ENCODE measurements at regions of chr6 and their contacts with region 1.

Region 1: GRCh38 chr6:134979142-134979541 is 29.2 kb upstream of the ALDH8A1 start:
- DNase-seq: peak; percentile 52
- H3K4me3 Mint-ChIP-seq: peak overlapping the region; percentile 43
- H3K27ac Mint-ChIP-seq: peak overlapping the region; percentile 65
- H3K4me1 Mint-ChIP-seq: peaks cover 58% of the 10 kb centered on the region
- H3K27me3 Mint-ChIP-seq: no peaks in the 10 kb centered on the region

Region 2: DNA sequence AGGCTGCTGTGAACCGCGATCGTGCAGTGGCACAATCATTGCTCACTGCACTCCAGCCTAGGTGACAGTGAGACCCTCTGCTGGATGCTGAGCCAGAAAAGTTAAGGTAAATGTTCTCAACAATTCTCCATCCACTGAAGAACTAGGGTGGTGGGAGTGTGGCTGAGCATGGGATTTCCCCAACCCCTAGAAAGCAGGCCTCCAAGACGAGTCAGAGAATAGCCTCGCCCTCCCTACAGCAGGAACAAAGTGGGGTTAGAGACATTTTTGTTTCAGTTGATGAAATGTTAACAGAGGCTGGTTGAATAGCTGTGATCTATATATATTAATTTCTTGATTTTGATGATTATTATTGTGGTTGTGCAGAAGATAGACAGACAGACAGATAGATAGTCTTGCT is 23.1 kb before region 1 on chr6:
- intact Hi-C with region 1: loop called (anchors 1 kb)
- DNase-seq: no peak
- H3K4me3 Mint-ChIP-seq: no peak overlapping the region
- H3K27ac Mint-ChIP-seq: no peak overlapping the region
- H3K4me1 Mint-ChIP-seq: peaks cover 20% of the 10 kb centered on the region
- H3K27me3 Mint-ChIP-seq: no peaks in the 10 kb centered on the region

Region 3: DNA sequence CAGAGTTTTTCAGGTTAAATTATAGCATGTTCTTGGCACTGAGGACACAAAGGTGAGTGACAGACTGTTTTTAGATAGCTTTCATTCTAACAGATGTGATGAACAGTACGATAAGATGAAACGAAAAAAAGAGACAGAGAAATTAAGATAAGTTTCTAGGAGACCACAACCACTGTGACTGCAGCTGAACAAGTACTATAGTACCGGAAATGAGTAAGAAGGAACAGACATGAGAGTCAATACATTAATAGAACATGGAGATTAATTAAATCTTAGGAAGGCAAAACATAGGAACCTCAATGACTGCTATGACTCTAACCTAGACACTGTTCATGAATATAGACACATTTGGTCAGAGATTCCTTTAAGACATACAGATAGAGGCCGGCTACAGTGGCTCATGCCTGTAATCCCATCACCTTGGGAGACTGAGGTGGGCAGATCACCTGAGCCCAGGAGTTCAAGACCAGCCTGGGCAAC is 35.3 kb after region 1 on chr6:
- intact Hi-C with region 1: loop called (anchors 1 kb)
- DNase-seq: no peak
- H3K4me3 Mint-ChIP-seq: peak overlapping the region; percentile 54
- H3K27ac Mint-ChIP-seq: peak overlapping the region; percentile 92
- H3K4me1 Mint-ChIP-seq: peaks cover 57% of the 10 kb centered on the region
- H3K27me3 Mint-ChIP-seq: no peaks in the 10 kb centered on the region

Region 4: DNA sequence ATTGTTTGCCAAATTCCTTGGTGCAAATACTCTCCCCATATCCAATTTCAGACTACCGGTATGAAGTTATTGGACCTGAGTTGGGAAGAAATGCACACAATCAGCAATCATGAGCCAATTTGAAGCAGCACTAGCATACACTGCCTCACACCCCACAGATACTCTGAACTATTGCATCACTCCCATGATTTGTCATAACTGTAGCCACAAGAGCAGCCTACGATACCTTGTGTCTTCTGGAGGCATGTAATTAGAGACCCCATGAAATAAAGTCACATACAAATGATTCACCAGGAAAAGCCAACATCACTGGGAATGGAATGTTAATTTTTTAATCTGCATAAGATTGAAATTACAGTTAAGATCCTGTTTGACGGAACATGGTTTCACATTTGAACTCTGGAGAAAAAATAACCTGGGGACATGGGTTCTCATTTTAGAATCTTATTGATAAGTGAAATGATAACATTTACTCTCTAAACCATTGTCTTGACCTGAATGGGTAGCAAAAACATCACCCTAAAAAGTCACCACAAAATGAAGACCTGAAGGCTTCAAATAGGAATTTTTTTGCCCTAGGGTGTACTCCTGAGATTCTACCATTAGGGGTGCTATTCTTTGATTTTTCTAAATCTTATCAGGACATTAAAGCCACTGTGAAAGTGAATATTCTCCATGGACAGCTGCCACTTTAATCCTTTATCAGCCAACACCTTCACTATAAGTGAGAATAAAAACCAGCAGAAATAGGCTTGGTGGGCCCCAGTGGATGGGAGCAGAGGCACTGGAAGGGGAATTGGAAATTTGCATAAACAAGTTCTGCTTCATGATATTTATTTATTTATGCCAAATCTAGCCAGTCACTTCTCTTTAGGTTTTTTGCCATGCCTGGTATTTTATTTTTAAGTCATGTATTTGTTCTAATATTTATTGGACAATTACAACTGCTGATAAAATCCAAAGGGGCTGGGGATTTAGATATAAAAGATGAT is 110.0 kb after region 1 on chr6:
- intact Hi-C with region 1: loop called (anchors 1 kb)
- DNase-seq: peak; percentile 58
- H3K4me3 Mint-ChIP-seq: peak overlapping the region; percentile 57
- H3K27ac Mint-ChIP-seq: peak overlapping the region; percentile 93
- H3K4me1 Mint-ChIP-seq: peaks cover 89% of the 10 kb centered on the region
- H3K27me3 Mint-ChIP-seq: no peaks in the 10 kb centered on the region

Region 5: GRCh38 chr6:135128268-135128914 is 149.2 kb after region 1 on chr6:
- intact Hi-C with region 1: loop called (anchors 1 kb)
- DNase-seq: peak; percentile 53
- H3K4me3 Mint-ChIP-seq: peak overlapping the region; percentile 66
- H3K27ac Mint-ChIP-seq: peak overlapping the region; percentile 97
- H3K4me1 Mint-ChIP-seq: peaks cover 63% of the 10 kb centered on the region
- H3K27me3 Mint-ChIP-seq: no peaks in the 10 kb centered on the region

Region 6: DNA sequence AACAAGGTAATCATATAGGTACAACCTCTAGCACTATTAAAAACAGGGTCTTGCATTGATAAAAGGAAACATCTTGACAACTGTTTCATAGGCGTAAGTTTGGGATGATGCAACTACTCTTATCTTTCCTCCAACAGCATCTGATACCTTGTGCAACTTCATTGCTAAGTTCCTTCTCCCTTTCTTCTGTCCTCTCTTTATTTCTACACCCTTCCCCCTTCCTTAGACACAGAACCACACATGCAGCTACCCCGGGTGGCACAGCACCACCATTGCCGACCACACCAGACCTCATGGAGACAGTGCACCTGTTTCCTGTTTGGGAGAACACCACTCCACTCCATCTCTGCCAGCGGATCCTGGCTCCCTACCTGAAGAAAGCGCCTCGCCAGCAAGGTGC is 216.4 kb after region 1 on chr6:
- intact Hi-C with region 1: loop called (anchors 1 kb)
- DNase-seq: no peak
- H3K4me3 Mint-ChIP-seq: peak overlapping the region; percentile 45
- H3K27ac Mint-ChIP-seq: peak overlapping the region; percentile 25
- H3K4me1 Mint-ChIP-seq: peaks cover 58% of the 10 kb centered on the region
- H3K27me3 Mint-ChIP-seq: no peaks in the 10 kb centered on the region